GM10248 (cell line): ENCODE measurements at regions of chr5 and their contacts with region 1.

Region 1: DNA sequence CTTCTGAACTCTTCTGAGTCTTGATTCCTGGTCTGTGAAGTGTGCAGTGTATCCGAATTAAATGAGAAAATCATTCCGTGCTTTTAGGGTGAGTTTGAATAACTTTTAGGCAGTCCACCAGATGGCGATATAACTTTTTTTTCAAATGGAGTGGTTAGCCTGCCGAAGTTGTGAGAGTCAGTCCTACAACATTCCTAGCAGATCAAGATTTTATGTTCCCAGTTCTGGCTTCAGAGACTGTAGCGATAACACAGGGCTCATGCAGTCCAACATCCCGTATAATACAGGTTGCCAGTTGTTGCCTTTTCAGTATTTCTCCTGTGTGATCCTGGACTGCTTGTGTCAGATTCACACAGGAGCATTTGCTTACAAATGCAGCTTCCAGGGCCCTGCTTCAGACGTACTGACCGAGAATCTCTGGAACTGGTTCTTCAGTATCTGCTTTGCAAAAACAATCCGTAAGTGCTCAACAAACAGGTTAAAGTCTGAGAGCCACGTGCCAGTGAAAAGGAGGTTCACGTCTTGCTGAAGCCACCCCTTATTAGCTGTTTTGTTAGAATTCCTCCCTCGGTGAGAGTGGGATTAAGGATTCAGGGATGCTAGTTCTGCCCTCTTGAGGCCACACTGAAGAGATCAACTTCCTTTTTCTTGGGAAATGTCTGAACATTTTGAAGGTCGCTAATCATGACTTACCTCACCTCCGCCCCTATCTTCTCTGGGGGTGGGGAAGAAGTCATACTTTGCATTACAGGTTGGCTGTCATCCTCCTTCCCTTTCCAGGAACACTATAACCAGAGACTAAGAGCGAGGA is 22.8 kb downstream of the SMIM3 start:
- DNase-seq: peak; percentile 41
- CTCF ChIP-seq: peak; percentile 53

Region 2: DNA sequence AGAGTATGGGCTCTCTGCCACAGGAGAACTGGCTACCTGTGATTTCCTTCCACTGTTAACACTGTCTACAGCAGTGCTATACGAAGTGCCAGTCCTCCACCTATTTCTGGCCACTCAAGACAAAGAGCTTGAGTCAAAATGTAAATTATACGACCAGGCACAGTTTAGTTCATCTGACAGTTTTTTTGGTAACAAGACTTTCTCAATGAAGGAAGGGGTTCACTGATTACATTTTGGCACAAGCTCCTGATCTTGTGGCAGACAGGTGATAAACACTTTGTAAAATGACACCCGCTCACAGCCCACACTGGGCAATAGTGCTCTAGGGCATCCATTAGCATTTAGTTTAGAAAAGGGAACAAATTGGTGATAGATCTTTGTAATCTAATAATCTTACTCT is 109.0 kb before region 1 on chr5:
- CTCF ChIA-PET with region 1: no interaction called
- POLR2A ChIA-PET with region 1: no interaction called
- DNase-seq: no peak
- CTCF ChIP-seq: no peak

Region 3: DNA sequence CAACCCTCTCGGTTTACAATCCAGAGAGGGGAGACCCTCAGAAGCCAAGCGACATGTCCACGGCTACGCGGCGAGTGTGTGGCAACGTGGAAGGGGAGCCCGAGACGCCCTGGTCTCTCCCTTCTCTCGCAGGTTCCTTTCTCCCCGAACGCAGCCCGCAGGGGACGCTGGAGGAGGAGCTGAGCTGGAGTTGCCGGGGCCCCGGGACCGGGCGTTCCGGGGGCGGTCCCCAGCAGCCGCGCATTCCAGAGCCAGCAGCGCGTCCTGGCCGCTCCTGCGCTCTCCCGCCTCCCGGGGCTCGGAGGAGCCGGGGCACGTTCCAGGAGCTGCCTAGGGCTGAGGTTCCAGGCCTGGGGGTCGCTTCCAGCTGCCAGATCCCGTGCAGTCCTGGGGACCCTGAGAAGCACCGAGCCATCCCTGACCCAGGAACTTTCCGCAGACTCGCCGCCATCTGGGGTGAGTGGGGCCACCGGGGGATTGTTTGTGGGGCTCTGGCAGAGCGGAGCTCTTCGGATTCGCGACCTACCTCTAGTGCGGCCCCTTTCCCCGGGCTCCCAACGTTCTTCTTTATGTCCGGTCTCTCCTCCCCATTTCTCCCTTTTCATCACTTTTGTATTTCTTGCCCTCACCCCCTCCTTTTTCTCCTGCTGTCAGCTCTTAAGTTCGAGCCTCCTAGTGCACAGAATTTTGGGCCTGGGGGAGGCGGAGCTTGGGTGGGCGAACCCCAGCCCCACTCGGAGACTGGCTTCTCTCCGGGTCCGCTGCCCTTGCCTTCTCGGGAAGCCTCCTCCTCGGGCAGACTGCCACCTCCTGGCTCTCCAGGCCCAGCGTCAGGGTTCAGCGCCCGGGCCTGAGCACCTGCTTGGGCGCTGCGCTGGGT is 22.6 kb before region 1 on chr5 and contains the start of gene SMIM3:
- CTCF ChIA-PET with region 1: interaction called, 20 read pairs
- POLR2A ChIA-PET with region 1: interaction called, 5 read pairs
- DNase-seq: peak; percentile 69
- CTCF ChIP-seq: peak; percentile 85

Region 4: DNA sequence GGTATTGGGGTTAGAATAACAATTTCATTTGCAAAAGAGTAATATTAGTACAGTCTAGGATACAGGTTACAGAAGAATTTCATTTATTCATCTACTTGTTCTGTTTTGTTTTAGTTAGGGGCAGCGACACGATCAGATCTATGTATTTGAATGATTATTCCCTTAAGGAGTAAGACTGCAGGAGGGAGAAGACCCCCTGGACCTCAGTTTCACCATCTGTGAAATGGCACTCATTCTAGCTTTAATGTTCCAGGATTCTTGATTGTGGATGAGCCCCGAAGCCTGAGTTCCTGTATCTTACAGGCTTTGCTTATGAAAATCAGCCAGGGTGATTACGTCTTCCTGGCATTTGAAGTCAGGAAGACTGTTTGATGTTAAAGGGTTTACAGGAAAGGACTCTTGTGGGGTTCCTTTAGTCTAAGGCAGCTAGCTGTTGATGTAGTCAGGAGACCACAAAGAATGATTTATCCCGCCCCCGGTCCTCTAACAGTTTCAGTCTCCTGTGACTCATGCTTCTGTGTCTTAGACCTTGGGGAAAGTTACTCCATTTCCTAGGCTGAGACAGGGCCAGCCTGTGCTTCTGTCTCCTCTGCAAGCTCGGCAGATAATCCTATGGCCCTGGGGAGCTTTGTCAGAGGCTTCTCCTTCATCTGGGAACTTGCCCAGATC is 11.2 kb before region 1 on chr5:
- CTCF ChIA-PET with region 1: interaction called, 12 read pairs
- POLR2A ChIA-PET with region 1: no interaction called
- DNase-seq: peak; percentile 70
- CTCF ChIP-seq: no peak

Region 5: DNA sequence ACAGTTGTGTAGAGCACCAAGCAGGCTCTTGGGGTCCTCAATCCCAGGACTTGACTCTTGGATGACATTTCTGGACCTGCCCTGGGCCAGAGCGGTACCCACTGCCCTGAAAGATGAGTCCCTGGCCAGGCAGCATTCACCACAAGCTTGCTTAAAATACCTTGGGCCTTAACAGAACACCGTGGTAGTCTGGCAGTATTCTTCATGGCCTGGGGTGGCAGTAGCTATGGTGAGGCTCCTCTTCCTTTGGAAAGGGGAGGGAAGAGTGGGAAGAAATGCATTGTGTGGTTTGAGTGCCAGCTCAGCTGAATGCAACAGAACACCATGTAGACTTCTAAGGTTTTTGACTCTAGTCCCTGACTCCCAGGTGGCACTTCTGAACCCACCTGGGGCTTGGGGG is 15.6 kb after region 1 on chr5:
- CTCF ChIA-PET with region 1: interaction called, 11 read pairs
- POLR2A ChIA-PET with region 1: no interaction called
- DNase-seq: no peak
- CTCF ChIP-seq: no peak